HAP-1 (cell line): ENCODE measurements at regions of chr17 and their contacts with region 1.

Region 1: GRCh38 chr17:3929764-3930163 is 13.5 kb upstream of the P2RX1 start:
- DNase-seq: no peak
- H3K4me3 ChIP-seq: no peak overlapping the region
- H3K4me1 ChIP-seq: no peaks in the 10 kb centered on the region
- H3K27me3 ChIP-seq: no peaks in the 10 kb centered on the region

Region 2: GRCh38 chr17:3990386-3991127 is 60.8 kb after region 1 on chr17:
- in situ Hi-C with region 1: loop called (anchors 5 kb)
- DNase-seq: no peak
- H3K4me3 ChIP-seq: no peak overlapping the region
- H3K4me1 ChIP-seq: no peaks in the 10 kb centered on the region
- H3K27me3 ChIP-seq: 0 out of 2 replicates have a peak, but pooled peaks cover 2% of the 10 kb centered on the region

Region 3: GRCh38 chr17:4004517-4005295 is 74.9 kb after region 1 on chr17:
- in situ Hi-C with region 1: no loop called
- DNase-seq: peak; percentile 45 to 75
- H3K4me3 ChIP-seq: no peak overlapping the region
- H3K4me1 ChIP-seq: no peaks in the 10 kb centered on the region
- H3K27me3 ChIP-seq: no peaks in the 10 kb centered on the region

Region 4: DNA sequence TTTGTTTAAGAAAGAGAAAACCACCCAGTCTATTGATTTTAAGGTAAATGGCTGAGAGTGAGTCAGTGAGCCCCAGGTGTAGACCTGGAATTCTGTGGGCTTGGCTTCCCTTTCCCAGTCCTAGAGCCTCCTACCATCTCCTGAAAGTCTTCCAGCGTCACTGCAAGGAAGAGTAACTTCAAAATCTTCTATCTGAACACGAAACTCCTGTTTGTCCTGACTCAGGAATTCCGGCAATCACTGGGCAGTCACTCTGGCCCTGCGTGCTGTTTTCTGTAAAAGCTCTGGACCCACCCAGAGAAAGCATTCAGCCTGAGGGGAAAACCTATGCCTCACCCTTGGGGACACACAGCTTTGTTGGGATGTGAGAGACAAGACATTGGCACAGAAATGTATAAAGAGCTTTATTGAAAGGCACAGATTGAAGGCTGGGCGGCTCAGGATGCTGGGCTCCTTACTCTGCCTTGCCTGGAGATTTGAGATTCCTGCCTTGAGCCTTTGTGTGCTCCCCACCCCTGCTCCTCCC is 919.3 kb after region 1 on chr17:
- in situ Hi-C with region 1: no loop called
- DNase-seq: peak in 1 of 2 experiments; percentile 29
- H3K4me3 ChIP-seq: no peak overlapping the region
- H3K4me1 ChIP-seq: peaks cover 6% of the 10 kb centered on the region
- H3K27me3 ChIP-seq: no peaks in the 10 kb centered on the region